K562 (cell line): ENCODE measurements at regions of chr5 and their contacts with region 1.

Region 1: DNA sequence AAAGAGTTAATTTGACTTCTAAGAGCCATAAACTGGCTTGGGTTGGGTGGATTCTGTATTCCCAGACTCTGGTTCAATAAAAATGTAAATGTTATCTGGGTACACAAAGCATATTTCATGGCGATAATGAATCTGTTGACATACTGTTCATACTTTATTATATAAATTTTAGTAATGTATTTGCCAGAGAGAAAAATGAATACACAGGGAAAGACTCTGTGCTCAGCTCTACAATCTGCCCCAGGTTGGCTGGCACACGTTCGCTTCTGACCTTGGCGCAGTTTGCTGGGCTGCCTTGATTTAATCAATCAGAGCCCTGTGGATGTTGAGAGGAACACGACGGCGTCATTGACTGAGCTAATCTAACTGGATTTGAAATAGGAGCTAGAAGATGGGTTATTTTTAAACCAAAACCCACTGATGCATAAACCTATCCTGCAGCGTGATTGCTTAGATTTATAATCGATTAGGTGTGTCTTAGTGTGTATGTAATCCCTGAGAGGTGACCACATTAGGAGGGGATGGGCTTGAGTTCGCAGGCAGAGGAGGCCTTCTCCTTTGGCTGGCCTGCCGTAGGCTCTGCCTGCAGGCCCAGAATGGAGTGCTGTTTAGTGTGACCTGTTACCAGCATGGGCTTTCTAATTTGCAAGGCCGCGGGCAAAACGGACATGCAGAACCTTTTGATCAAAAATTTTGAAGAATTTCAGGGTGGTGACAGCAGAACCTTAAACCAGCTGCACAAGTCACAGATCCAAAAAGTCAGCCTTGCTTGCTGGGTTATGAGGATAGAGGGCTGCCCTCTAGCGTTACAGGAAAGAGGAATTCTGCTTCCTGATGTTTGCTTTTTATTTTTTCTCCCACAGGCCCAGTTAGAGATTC is 3.9 kb upstream of the ADCY2 start:
- DNase-seq: peak in 2 of 4 experiments; percentile 22 to 34
- ATAC-seq: peak; percentile 71
- H3K4me3 ChIP-seq: no peak overlapping the region
- H3K27ac ChIP-seq: no peak overlapping the region
- H3K4me1 ChIP-seq: peaks cover 0 to 10% of the 10 kb centered on the region in 2 experiments; a peak in 1 of 5 replicates
- H3K27me3 ChIP-seq: peaks cover 0 to 20% of the 10 kb centered on the region in 2 experiments; a peak in 2 of 5 replicates
- CTCF ChIP-seq: peak; percentile 48 to 63 (median 52)
- EP300 ChIP-seq: no peak
- POLR2A ChIP-seq: no peak
- RAD21 ChIP-seq: peak; percentile 37 to 59

Region 2: GRCh38 chr5:7261049-7261448 is 131.0 kb before region 1 on chr5:
- CTCF ChIA-PET with region 1: no interaction called
- POLR2A ChIA-PET with region 1: no interaction called
- in situ Hi-C with region 1: no loop called
- intact Hi-C with region 1: loop called (anchors 1 kb)
- DNase-seq: peak; percentile 18 to 49 (median 20)
- ATAC-seq: peak; percentile 68
- H3K4me3 ChIP-seq: no peak overlapping the region
- H3K27ac ChIP-seq: no peak overlapping the region
- H3K4me1 ChIP-seq: no peaks in the 10 kb centered on the region
- H3K27me3 ChIP-seq: no peaks in the 10 kb centered on the region
- CTCF ChIP-seq: peak; percentile 48 to 71 (median 63)
- EP300 ChIP-seq: no peak
- POLR2A ChIP-seq: no peak
- RAD21 ChIP-seq: peak; percentile 68 to 81